ENCODE measurements at regions of chr10 and their contacts with region 1.

Region 1: GRCh38 chr10:110210674-110211464 is 3.5 kb downstream of the MXI1 start:
- DNase-seq: peak; percentile 99
- H3K4me3 ChIP-seq: peak overlapping the region; percentile 48 to 68 (median 57)
- H3K27ac ChIP-seq: no peak overlapping the region
- H3K4me1 ChIP-seq: peaks cover 4% of the 10 kb centered on the region
- H3K27me3 ChIP-seq: peaks cover 21 to 29% of the 10 kb centered on the region in 2 experiments
- CTCF ChIP-seq: no peak
- POLR2A ChIP-seq: no peak

Region 2: DNA sequence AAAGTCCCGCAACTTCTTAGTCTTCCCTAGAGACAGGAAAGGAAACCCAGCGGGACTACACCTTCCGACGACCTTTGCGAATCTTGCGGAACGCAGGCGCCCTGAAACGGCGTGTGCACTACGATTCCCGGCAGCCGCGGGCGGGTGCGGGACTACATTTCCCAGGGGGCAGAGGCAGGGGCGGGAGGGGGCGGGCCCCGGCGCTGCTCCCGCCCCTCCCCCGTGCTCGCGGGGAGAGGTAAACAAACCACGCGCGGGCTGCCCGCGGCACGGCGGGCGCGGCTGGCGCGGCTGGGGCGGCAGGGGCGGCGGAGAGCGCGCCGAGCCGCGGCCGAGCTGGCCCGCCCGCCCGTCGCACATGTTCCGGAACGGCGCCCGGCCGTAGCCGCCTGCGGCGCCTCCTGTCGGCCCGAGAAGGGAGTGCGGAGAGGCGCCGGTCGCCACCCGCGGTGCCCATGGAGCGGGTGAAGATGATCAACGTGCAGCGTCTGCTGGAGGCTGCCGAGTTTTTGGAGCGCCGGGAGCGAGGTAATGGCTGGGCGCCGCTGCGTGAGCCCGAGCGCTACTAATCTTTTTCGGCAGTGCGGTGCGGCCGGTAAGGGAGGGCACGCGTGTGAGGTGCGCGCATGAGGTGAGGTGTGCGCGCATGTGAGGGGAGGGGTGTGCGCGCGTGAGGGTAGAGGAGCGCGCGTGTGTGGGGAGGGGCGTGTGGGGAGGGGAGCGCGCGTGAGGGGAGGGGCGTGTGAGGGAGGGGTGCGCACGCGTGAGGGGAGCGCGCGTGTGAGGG is 15.1 kb after region 1 on chr10:
- CTCF ChIA-PET with region 1: interaction called, 99 read pairs
- POLR2A ChIA-PET with region 1: interaction called, 10 read pairs
- dilution Hi-C with region 1: no loop called
- intact Hi-C with region 1: loop called (anchors 1 kb)
- DNase-seq: peak; percentile 89
- H3K4me3 ChIP-seq: peak overlapping the region; percentile 74 to 92 (median 75)
- H3K27ac ChIP-seq: no peak overlapping the region
- H3K4me1 ChIP-seq: peaks cover 8% of the 10 kb centered on the region
- H3K27me3 ChIP-seq: no peaks in the 10 kb centered on the region
- CTCF ChIP-seq: peak; percentile 54 to 79
- POLR2A ChIP-seq: no peak

Region 3: DNA sequence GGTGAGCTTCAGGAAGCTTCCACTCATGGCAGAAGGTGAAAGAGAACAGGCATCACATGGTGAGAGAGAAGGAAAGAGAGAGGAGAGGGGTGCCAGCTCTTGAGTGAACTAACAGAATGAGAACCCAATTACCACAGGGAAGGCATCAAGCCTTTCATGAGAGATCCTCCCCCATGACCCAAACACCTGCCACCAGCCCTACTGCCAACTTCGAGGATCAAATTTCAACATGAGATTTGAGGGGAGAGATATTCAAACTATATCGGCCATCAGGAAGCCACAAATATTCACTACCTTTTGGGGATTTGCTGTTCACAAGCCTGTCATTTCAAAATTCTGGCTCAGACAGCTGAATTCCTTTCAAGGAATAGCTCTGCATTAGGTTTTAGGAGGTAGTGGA is 133.8 kb after region 1 on chr10:
- CTCF ChIA-PET with region 1: no interaction called
- POLR2A ChIA-PET with region 1: no interaction called
- dilution Hi-C with region 1: no loop called
- intact Hi-C with region 1: no loop called
- DNase-seq: no peak
- H3K4me3 ChIP-seq: no peak overlapping the region
- H3K27ac ChIP-seq: no peak overlapping the region
- H3K4me1 ChIP-seq: no peaks in the 10 kb centered on the region
- H3K27me3 ChIP-seq: peaks cover 0 to 5% of the 10 kb centered on the region in 2 experiments
- CTCF ChIP-seq: no peak
- POLR2A ChIP-seq: no peak

Measured in endothelial cell of umbilical vein (primary cell).